AG04449 (cell line): ENCODE measurements at regions of chr1 and their contacts with region 1.

Region 1: DNA sequence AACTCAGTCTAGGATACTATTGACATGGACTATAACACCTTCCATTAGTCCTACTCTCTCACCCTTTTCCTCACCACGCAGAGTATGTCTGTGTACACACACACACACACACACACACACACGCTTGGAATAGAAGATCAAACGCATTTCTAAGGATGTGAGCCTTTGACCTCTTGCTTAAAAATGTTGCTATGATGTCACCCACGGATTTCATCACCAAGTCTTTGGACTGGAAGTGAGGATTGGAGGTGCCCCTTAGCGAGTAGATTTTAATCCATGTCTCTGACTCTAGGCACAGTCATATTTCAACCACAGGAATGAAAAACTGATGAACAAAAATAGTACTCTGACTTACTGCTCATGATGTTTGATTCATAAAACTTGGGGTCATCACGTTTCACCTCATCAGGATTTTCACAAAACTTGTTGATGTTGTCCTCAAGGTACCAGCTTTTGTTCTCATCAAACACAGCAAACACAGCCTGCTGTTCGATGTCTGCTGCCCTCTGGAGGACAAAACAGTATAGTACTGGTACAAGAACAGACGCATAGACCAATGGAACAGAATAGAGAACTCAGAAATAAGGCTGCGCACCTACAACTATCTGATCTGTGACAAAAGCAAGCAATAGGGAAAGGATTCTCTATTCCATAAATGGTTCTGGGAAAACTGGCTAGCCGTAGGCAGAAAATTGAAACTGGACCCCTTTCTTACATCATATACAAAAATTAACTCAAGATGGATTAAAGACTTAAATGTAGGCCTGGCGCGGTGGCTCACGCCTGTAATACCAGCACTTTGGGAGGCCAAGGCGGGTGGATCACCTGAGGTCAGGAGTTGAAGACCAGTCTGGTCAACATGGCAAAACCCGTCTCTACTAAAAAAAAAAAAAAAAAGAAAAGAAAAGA is 39.9 kb downstream of the F5 start:
- DNase-seq: peak; percentile 14
- H3K4me3 ChIP-seq: no peak overlapping the region
- CTCF ChIP-seq: peak; percentile 70

Region 2: GRCh38 chr1:168603501-168604110 is 942.7 kb before region 1 on chr1:
- CTCF ChIA-PET with region 1: interaction called, 15 read pairs
- POLR2A ChIA-PET with region 1: no interaction called
- DNase-seq: no peak
- H3K4me3 ChIP-seq: no peak overlapping the region
- CTCF ChIP-seq: peak; percentile 87

Region 3: GRCh38 chr1:169466259-169467230 is 79.8 kb before region 1 on chr1:
- CTCF ChIA-PET with region 1: interaction called, 43 read pairs
- POLR2A ChIA-PET with region 1: no interaction called
- DNase-seq: no peak
- H3K4me3 ChIP-seq: no peak overlapping the region
- CTCF ChIP-seq: peak; percentile 40

Region 4: DNA sequence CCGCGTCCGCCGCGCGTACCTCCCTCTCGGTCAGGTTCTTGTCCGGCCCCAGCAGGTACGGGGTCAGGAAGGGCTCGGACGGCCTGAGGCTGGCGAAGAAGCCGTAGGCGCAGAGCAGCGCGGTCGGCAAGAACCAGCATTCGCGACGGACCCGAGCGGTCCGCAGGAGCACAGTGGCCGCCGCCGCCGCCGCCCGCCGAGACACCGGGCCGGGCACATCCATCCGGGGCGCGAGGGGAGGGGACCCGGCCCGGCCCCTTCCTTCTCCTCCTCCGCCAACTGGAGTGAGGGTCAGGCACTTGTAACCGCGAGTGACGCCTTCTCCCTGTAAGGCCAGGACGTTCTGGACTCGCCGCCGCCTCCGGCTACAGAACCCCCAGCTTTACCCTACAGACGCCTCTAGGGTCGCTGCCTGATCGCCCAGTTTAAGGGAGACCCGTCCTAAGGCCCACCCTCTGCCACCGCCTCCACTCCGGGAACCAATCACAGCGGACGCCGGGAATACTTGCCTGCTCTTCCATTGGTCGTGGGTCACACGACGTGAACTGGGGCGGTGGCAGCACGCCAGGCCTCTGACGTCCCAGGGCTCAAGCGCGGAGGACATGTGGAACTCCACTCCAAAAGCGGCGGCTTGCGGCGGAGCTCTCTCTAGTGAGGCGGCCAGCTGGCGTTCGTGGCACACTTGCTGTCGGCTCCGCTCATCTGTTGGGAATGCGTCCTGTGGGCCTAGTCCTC is 60.6 kb before region 1 on chr1 and contains the start of gene SLC19A2:
- CTCF ChIA-PET with region 1: interaction called, 11 read pairs
- POLR2A ChIA-PET with region 1: no interaction called
- DNase-seq: peak; percentile 96
- H3K4me3 ChIP-seq: peak within 1 kb of the TSS; percentile 78
- CTCF ChIP-seq: peak; percentile 32

Region 5: GRCh38 chr1:169529068-169529696 is 17.2 kb before region 1 on chr1:
- CTCF ChIA-PET with region 1: no interaction called
- POLR2A ChIA-PET with region 1: no interaction called
- DNase-seq: no peak
- H3K4me3 ChIP-seq: no peak overlapping the region
- CTCF ChIP-seq: no peak

Region 6: GRCh38 chr1:169557131-169557530 is 10.8 kb after region 1 on chr1:
- CTCF ChIA-PET with region 1: interaction called, 10 read pairs
- POLR2A ChIA-PET with region 1: no interaction called
- DNase-seq: no peak
- H3K4me3 ChIP-seq: no peak overlapping the region
- CTCF ChIP-seq: no peak

Region 7: GRCh38 chr1:169809370-169810095 is 263.2 kb after region 1 on chr1:
- CTCF ChIA-PET with region 1: interaction called, 33 read pairs
- POLR2A ChIA-PET with region 1: no interaction called
- DNase-seq: no peak
- H3K4me3 ChIP-seq: no peak overlapping the region
- CTCF ChIP-seq: peak; percentile 21